GM12878 (cell line): ENCODE measurements at regions of chr18 and their contacts with region 1.

Region 1: GRCh38 chr18:53135654-53136053 is 795.7 kb downstream of the DCC start:
- DNase-seq: no peak
- ATAC-seq: no peak
- H3K4me3 ChIP-seq: no peak overlapping the region
- H3K27ac ChIP-seq: no peak overlapping the region
- H3K4me1 ChIP-seq: no peaks in the 10 kb centered on the region
- H3K27me3 ChIP-seq: no peaks in the 10 kb centered on the region
- CTCF ChIP-seq: no peak
- EP300 ChIP-seq: no peak
- POLR2A ChIP-seq: no peak
- RAD21 ChIP-seq: no peak

Region 2: DNA sequence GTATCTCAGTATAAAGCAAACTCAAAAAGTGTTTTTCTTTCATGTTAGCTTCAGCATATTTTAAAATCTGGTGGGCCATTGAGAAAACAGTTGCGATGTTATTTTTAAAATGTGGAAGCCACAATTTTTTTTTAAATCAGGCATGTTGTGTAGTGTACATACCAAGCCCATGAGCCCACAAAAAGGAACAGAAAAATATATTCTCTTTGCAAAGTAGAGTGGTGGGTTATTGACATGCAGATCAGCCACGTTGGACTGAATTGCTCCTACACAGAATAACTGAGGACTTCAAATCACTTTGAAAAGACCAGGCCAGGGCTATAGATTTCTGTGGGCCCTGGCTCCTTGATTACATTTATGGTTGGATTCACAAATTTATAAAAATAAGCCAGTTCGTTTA is 21.2 kb before region 1 on chr18:
- CTCF ChIA-PET with region 1: no interaction called
- POLR2A ChIA-PET with region 1: no interaction called
- RAD21 ChIA-PET with region 1: no interaction called
- SMC1A ChIA-PET with region 1: no interaction called
- in situ Hi-C with region 1: no loop called
- intact Hi-C with region 1: loop called (anchors 1 kb)
- DNase-seq: no peak
- ATAC-seq: no peak
- H3K4me3 ChIP-seq: no peak overlapping the region
- H3K27ac ChIP-seq: no peak overlapping the region
- H3K4me1 ChIP-seq: no peaks in the 10 kb centered on the region
- H3K27me3 ChIP-seq: no peaks in the 10 kb centered on the region
- CTCF ChIP-seq: no peak
- EP300 ChIP-seq: no peak
- POLR2A ChIP-seq: no peak
- RAD21 ChIP-seq: no peak